Panc1 (cell line): ENCODE measurements at regions of chr18 and their contacts with region 1.

Region 1: DNA sequence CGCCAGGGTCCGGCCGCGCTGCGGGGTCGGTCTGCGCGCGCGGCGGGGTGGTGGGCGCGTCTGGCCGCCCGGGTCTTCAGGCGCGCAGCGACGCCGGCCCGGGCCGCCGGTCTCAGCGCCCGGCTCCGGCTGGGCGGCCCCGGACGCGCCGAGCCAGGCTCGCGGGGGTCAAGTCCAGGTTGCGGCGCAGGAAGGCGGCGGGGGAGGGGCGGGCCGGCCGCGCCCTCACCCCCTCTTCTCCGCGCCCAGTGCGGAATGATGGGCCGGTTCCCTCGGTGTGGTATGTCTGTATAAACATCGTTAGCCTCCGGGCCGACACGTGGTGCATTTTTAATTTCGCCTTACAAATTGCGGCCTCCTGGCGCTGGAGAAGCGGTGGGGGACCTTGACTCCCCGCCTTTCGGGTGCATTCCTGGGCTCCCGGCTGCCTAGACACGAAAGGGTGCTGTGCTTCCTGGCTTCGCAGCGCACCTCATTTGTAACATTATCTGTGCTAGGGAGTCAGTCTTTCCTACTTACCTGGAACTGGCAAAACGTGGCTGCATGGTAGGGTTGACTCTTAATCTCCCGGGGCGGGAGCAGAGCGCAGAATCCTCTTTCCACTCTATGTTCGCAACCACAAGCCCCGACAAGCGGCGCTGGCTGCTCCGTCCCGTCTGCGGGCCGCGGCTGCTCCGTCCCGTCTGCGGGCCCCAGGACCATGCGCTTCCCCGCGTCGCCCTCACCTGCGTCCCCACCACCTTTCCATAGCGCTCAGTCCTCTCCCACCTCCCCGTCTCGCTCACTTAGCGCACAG is 69.0 kb downstream of the CTAGE1 start:
- DNase-seq: no peak
- ATAC-seq: peak; percentile 64
- H3K4me3 ChIP-seq: peak overlapping the region; percentile 11 to 35; a peak in 3 of 4 replicates
- H3K27ac ChIP-seq: no peak overlapping the region
- H3K4me1 ChIP-seq: no peaks in the 10 kb centered on the region
- H3K27me3 ChIP-seq: peaks cover 25% of the 10 kb centered on the region
- CTCF ChIP-seq: no peak

Region 2: DNA sequence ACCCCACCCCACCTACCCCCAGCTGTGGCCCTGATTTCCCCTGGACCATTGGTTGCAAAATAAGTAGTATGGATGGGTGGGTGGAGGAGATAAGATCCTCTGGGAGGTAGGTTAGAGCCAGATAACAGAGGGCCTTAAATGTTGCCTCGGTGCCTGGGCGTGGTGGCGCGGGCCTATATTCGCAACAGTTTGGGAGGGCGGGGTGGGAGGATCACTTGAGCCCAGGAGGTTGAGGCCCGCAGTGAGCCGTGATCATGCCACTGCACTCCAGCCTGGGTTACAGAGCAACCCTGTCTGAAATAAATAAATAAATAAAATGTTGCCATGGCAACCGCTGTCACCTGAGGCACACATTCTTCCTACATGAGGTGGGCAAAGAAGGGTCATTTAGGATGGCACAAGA is 282.6 kb before region 1 on chr18:
- CTCF ChIA-PET with region 1: no interaction called
- POLR2A ChIA-PET with region 1: no interaction called
- in situ Hi-C with region 1: no loop called
- intact Hi-C with region 1: no loop called
- DNase-seq: no peak
- ATAC-seq: no peak
- H3K4me3 ChIP-seq: no peak overlapping the region
- H3K27ac ChIP-seq: no peak overlapping the region
- H3K4me1 ChIP-seq: no peaks in the 10 kb centered on the region
- H3K27me3 ChIP-seq: no peaks in the 10 kb centered on the region
- CTCF ChIP-seq: no peak

Region 3: GRCh38 chr18:22170421-22171262 is 178.1 kb before region 1 on chr18:
- CTCF ChIA-PET with region 1: no interaction called
- POLR2A ChIA-PET with region 1: no interaction called
- in situ Hi-C with region 1: no loop called
- intact Hi-C with region 1: loop called (anchors 10 kb)
- DNase-seq: no peak
- ATAC-seq: peak; percentile 50; the same call in 1 of the 2 replicates
- H3K4me3 ChIP-seq: peak overlapping the region; percentile 50 to 67
- H3K27ac ChIP-seq: no peak overlapping the region
- H3K4me1 ChIP-seq: peaks cover 27% of the 10 kb centered on the region
- H3K27me3 ChIP-seq: peaks cover 49% of the 10 kb centered on the region
- CTCF ChIP-seq: no peak

Region 4: DNA sequence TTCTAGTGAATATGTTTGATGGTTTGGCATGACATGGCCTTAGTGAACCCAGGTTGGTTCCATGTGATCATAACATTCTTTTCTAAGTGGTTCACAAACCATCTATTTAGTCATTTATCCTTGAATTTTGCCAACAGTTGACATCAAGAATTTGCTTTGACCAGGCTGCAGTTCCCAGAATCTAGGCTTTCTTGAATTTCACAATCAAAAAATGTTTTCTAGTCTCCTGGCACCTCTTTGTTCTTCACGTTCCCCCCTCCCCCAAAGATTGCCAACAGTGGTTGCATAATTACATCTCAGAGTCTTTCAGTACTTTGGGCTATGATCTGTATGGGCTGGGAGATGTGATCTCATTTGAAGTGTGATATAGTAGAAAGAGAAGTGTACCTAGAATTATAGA is 55.3 kb before region 1 on chr18:
- CTCF ChIA-PET with region 1: no interaction called
- POLR2A ChIA-PET with region 1: no interaction called
- in situ Hi-C with region 1: no loop called
- intact Hi-C with region 1: loop called (anchors 10 kb)
- DNase-seq: no peak
- ATAC-seq: no peak
- H3K4me3 ChIP-seq: no peak overlapping the region
- H3K27ac ChIP-seq: no peak overlapping the region
- H3K4me1 ChIP-seq: no peaks in the 10 kb centered on the region
- H3K27me3 ChIP-seq: peaks cover 10% of the 10 kb centered on the region
- CTCF ChIP-seq: no peak